Right ventricle myocardium inferior (tissue), 1 donor: ENCODE measurements at regions of chr10 and their contacts with region 1.

Region 1: DNA sequence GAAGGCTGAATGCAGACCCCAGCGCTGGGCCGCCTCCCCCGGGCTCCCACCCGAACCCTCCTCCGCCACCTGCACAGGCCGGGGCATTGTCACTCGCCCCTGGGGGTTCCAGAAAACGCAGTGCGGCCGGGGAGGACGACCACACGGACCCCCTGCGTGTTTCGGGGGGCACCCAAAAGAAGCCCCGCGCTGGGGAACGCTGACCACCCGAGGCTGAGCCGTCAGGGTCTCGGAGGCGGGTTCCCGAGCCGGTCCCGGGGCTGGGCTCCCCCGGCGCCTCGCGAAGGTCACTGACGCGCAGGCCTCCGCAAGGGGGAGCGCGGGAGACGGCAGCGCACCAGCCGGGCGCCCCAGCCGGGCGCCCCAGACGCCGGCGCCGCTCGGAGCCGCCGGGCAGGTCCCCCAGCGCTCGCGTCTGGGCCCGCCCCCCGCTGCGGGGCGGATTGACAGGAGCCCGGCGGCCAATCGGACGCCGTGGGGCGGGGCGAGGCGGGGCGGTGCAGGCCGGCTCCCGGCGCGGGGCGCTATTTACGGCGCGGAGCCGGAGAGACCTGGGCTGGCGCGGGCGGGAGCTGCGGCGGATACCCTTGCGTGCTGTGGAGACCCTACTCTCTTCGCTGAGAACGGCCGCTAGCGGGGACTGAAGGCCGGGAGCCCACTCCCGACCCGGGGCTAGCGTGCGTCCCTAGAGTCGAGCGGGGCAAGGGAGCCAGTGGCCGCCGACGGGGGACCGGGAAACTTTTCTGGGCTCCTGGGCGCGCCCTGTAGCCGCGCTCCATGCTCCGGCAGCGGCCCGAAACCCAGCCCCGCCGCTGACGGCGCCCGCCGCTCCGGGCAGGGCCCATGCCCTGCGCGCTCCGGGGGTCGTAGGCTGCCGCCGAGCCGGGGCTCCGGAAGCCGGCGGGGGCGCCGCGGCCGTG is at the start of gene BAMBI:
- DNase-seq: peak; percentile 96
- ATAC-seq: peak; percentile 98
- total RNA-seq, gene BAMBI: 17.9 TPM

Region 2: GRCh38 chr10:28532383-28533175 is 144.6 kb before region 1 on chr10 and contains the start of gene WAC:
- intact Hi-C with region 1: loop called (anchors 5 kb)
- DNase-seq: peak; percentile 98
- ATAC-seq: peak; percentile 95
- total RNA-seq, gene WAC: 100 TPM

Region 3: GRCh38 chr10:28754930-28755718 is 77.9 kb after region 1 on chr10:
- intact Hi-C with region 1: no loop called
- DNase-seq: no peak
- ATAC-seq: no peak

Region 4: DNA sequence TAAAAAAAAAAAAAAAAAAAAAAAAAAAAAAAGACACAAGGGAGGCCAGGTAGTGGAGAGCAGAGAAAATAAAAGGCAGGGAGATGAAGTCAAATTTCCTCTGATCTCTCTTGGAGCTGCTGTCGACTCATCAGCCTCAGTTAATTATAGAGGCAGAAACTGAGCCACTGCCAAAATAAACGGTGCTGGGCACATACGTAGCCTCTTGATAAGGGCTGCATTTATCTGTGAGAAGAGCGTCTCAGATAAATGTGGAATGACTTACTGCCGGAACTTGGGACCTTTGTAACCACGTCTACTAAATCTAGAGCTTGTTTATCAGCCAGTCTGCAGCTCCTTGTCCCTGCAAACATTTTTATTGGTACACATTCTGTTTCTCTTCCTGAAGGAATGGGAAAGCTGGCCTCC is 162.4 kb after region 1 on chr10:
- intact Hi-C with region 1: loop called (anchors 5 kb)
- DNase-seq: no peak
- ATAC-seq: peak; percentile 87

Region 5: DNA sequence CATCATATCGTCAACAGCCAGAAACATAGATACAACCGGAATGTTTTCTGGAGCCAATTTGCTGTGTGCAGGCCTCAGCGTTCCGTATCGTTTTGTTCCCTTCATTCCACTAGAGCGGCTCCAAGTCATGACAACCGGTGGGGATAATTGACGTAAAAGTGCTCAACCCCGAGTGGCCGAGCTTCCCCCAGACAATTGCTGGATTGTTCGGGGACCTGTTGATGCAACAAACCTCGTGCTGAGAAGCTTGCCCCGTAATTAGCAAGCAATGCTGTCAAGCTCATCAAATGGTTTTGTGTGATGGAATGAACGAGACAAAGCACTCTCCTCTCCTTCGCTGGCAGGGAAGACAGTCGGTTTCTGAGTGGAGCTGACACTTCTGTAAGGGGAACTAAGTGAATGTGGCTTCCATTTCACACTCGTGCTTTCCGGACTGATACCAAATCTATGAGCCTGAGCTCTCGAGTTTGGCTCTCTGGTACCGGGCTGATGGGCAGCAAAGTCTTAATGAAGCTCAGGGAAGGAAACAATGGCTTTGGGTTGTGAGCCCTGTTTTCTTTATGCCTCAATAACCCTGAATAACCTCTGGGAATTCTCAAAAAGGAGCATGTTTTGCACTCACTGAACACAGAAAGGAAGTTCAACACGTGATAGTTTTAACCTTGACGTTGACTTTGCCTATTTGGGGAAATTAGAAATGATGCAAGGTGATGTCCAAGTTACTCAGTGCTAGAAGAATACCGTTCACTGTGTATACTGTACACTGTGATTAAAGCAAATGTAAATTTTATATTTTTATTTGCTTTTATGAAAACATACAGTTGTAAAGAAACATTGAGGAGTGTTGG is 220.6 kb after region 1 on chr10:
- intact Hi-C with region 1: loop called (anchors 2 kb)
- DNase-seq: no peak
- ATAC-seq: peak; percentile 96

Region 6: GRCh38 chr10:28984431-28984830 is 307.2 kb after region 1 on chr10:
- intact Hi-C with region 1: loop called (anchors 1 kb)
- DNase-seq: peak; percentile 91
- ATAC-seq: peak; percentile 98

Region 7: DNA sequence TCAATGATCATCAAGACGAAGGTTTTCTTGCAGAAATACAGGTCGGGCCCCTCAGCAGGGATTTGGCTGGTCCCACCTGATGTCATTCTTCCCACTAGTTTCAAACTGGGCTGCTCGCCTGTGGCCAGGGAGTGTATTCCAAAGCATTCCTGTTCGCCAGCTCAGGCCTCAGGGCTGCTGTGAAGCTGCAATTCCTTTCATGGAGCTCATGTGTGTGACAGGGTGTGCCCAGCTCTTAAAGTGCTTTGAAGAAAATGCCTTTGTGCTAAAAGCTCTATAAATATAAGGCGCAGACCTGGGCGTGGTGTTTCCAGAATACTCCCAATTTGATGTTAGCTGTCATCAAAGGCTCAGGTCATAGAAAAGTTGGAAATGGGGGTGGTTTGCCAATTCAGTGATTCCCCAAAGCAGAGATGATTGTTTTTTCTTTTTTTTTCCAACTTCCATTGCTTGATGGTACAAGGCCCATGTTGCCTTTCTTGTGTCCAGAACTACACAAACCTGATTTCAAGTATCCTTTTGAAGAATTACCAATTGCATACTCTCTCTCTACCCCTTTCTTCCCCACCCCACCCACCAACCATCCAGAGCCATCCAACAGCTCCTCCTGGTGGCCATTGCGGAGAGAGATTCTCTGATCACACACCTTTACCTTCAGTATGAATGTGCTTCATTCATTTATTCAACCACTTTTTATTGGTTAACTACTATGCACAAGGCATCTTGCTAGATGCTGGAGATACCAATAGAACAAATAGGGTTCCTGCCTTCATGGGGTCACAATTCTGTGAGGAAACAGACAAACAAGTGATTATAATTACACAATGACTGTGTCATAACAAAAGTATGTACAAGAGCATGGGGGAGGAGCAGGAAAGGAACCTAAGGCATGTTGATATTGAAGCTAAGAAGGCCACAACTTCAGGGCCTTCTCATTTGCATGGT is 314.4 kb after region 1 on chr10:
- intact Hi-C with region 1: loop called (anchors 1 kb)
- DNase-seq: no peak
- ATAC-seq: peak; percentile 80